Endothelial cell of umbilical vein (primary cell): ENCODE measurements at regions of chr4 and their contacts with region 1.

Region 1: GRCh38 chr4:151276787-151277562 is at the start of gene PRSS48:
- DNase-seq: peak; percentile 65
- H3K4me3 ChIP-seq: no peak within 1 kb of the TSS
- H3K27ac ChIP-seq: no peak within 1 kb of the TSS
- H3K4me1 ChIP-seq: no peaks in the 10 kb centered on the region
- H3K27me3 ChIP-seq: no peaks in the 10 kb centered on the region
- CTCF ChIP-seq: peak; percentile 87 to 88
- POLR2A ChIP-seq: no peak
- total RNA-seq, gene PRSS48: not detected in 2 replicates

Region 2: GRCh38 chr4:151263455-151263854 is 13.5 kb before region 1 on chr4:
- CTCF ChIA-PET with region 1: interaction called, 13 read pairs
- POLR2A ChIA-PET with region 1: no interaction called
- dilution Hi-C with region 1: no loop called
- intact Hi-C with region 1: no loop called
- DNase-seq: no peak
- H3K4me3 ChIP-seq: no peak overlapping the region
- H3K27ac ChIP-seq: no peak overlapping the region
- H3K4me1 ChIP-seq: peaks cover 13% of the 10 kb centered on the region
- H3K27me3 ChIP-seq: no peaks in the 10 kb centered on the region
- CTCF ChIP-seq: no peak
- POLR2A ChIP-seq: no peak

Region 3: DNA sequence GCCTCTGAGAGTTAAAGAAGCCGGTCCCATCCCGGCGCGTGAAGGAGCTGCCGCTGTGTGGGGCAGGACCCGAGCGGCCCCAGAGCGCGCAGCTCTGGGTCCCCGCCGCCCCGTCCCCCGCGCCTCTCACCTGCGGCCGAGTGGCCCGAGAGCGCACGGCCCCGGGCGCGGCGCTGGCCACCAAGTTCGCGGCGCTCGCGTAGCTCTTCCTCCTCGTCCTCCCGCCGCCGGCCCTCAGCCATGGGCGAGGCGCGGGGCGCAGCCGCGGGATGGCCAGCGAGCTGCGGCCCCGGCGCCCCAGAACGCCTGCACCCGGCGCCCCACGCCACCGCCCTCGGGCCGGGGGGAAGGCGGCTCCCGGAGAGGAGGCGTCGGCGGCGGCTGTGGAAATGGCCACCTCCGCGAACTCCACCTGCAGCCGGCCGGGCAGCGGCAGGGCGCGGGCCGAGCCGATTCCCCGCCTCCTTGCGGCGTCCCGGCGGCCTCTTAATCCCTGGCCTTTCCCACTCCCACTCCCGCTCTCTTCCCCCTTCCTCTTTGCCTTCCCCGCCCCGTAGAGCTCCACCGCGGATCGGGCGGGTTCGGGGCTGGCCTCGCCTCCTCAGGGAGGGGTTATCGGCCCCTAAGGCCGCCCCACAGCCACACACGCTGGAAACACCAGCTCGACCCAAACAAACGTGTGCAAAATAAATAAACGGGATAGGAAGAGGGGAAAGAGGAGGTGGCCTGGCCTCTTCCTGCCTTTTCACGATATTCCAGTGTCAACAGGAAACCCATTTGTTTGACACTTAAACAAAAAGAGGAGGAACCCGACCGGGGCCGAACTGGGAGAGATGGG is 48.4 kb after region 1 on chr4 and contains the start of gene SH3D19:
- CTCF ChIA-PET with region 1: interaction called, 30 read pairs
- POLR2A ChIA-PET with region 1: no interaction called
- dilution Hi-C with region 1: no loop called
- intact Hi-C with region 1: no loop called
- DNase-seq: peak; percentile 91
- H3K4me3 ChIP-seq: peak within 1 kb of the TSS; percentile 55 to 86 (median 74)
- H3K27ac ChIP-seq: peak within 1 kb of the TSS; percentile 69
- H3K4me1 ChIP-seq: peaks cover 24% of the 10 kb centered on the region
- H3K27me3 ChIP-seq: no peaks in the 10 kb centered on the region
- CTCF ChIP-seq: no peak
- POLR2A ChIP-seq: peak; percentile 30
- total RNA-seq, gene SH3D19: 86.3 and 92.8 TPM in 2 replicates

Region 4: DNA sequence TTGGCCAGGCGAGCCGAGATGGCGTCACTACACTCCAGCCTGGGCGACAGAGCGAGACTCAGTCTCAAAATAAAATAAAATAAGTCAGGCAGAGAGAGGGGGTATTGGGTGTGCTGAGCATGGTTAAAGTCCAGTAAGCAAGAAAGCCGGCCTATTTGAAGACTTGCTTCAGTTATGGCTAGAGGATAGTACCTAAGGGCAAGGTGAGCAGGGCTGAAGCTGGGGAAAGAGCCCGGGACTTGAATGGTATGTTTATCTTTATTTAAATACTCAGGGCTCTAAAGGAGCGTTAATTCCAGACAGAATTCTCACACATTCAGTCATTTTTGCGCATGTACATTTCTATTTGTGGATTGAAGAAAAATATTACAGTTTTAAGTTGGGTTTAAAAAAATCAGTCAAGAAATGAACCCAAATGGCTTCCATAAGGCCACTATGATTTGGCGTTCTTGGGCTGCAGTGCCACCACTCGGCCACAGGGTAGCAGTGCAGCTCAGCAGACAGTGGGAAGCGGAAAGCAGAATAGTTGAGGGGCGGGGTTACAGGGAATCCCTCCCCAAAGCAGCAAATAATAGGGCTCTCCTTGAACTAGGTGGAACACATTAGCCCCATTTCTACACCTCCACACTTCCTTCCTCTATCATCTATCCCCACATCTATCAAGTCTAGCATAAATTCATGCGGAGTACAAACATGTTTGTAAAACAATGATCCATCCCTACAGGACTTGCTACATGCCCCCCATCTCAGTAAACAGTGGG is 85.6 kb after region 1 on chr4:
- CTCF ChIA-PET with region 1: interaction called, 40 read pairs
- POLR2A ChIA-PET with region 1: no interaction called
- dilution Hi-C with region 1: no loop called
- intact Hi-C with region 1: loop called (anchors 1 kb)
- DNase-seq: peak; percentile 87
- H3K4me3 ChIP-seq: no peak overlapping the region
- H3K27ac ChIP-seq: no peak overlapping the region
- H3K4me1 ChIP-seq: no peaks in the 10 kb centered on the region
- H3K27me3 ChIP-seq: no peaks in the 10 kb centered on the region
- CTCF ChIP-seq: peak; percentile 96 to 100
- POLR2A ChIP-seq: no peak

Region 5: GRCh38 chr4:151418385-151418784 is 141.4 kb after region 1 on chr4:
- CTCF ChIA-PET with region 1: interaction called, 4 read pairs
- POLR2A ChIA-PET with region 1: no interaction called
- dilution Hi-C with region 1: no loop called
- intact Hi-C with region 1: loop called (anchors 2 kb)
- DNase-seq: peak; percentile 91
- H3K4me3 ChIP-seq: no peak overlapping the region
- H3K27ac ChIP-seq: peak overlapping the region; percentile 89
- H3K4me1 ChIP-seq: peaks cover 43% of the 10 kb centered on the region
- H3K27me3 ChIP-seq: no peaks in the 10 kb centered on the region
- CTCF ChIP-seq: no peak
- POLR2A ChIP-seq: peak; percentile 35

Region 6: DNA sequence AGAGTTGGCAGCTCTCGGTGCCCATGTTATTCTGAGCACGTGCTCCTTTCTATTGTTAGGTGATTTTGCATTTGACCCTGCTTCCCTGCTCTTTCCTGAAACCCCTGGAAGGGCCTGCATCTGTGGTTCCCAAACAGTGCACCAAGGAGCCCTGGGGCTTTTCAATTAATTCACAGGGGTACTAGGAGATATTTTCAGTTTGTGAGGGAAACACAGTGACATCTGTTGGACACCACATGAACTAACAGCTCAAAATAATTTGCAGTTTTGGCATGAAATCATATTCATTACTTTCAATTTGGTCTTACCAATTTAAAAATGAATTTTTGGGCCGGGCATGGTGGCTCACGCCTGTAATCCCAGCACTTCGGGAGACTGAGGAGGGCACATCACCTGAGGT is 327.3 kb after region 1 on chr4:
- CTCF ChIA-PET with region 1: interaction called, 22 read pairs
- POLR2A ChIA-PET with region 1: no interaction called
- dilution Hi-C with region 1: no loop called
- intact Hi-C with region 1: loop called (anchors 2 kb)
- DNase-seq: peak; percentile 33
- H3K4me3 ChIP-seq: no peak overlapping the region
- H3K27ac ChIP-seq: no peak overlapping the region
- H3K4me1 ChIP-seq: no peaks in the 10 kb centered on the region
- H3K27me3 ChIP-seq: peaks cover 0 to 7% of the 10 kb centered on the region in 2 experiments
- CTCF ChIP-seq: peak; percentile 29 to 44
- POLR2A ChIP-seq: no peak

Region 7: DNA sequence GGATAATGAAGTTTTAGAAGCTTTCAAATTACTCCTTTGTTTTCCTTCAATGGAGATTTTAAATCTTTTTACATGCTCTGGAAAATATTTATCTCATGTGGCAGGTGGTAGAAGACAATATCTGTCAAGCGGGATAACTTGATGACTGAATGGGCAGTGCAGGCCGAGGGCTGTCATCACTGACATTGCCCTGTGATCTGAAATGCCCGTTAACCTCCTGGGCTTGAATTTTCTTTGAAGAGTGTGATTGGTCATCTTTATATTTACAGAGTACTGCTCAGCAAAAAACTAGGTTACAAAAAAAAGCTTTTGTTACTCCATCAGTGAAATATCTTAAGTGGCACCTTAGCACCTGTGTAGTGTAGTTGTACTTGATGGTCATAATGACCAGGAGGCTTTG is 336.3 kb after region 1 on chr4:
- CTCF ChIA-PET with region 1: interaction called, 3 read pairs
- POLR2A ChIA-PET with region 1: no interaction called
- dilution Hi-C with region 1: no loop called
- intact Hi-C with region 1: loop called (anchors 2 kb)
- DNase-seq: no peak
- H3K4me3 ChIP-seq: no peak overlapping the region
- H3K27ac ChIP-seq: no peak overlapping the region
- H3K4me1 ChIP-seq: no peaks in the 10 kb centered on the region
- H3K27me3 ChIP-seq: peaks cover 0 to under 1% of the 10 kb centered on the region in 2 experiments
- CTCF ChIP-seq: no peak
- POLR2A ChIP-seq: no peak